Activated CD4-positive, alpha-beta memory T cell treated with anti-CD3 and anti-CD28 coated beads, Interleukin-2, amount 10 ng/mL, durations not matched to agents 7 days and 5 days (primary cell): ENCODE measurements at regions of chr17 and their contacts with region 1.

Region 1: DNA sequence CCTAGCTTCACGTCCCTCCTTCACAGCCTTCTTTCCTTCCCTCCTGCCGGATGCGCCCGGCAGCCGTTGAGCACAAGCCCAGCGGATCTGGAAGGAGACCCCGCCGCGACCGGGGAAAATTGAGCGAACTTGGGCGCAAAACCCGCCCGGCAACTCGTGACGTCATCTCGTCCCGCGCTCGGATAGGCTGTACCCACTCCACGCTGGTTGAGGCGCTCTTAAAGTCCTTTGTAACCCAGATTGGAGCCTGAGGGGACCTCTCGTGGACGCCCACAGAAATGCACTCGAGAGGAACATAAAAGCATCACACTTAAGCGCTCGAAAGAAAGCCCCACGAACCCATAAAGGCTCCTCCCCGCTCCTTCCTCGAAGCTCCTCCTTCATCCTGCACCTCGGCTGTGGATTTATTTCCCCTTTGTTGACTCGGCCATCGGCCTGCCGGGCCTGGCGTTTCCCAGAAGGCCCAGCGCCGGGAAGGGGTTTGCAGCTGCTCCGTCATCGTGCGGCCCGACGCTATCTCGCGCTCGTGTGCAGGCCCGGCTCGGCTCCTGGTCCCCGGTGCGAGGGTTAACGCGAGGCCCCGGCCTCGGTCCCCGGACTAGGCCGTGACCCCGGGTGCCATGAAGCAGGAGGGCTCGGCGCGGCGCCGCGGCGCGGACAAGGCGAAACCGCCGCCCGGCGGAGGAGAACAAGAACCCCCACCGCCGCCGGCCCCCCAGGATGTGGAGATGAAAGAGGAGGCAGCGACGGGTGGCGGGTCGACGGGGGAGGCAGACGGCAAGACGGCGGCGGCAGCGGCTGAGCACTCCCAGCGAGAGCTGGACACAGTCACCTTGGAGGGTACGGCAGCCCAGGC is at the start of gene PSMD3:
- DNase-seq: peak; percentile 99
- H3K4me3 Mint-ChIP-seq: peak within 1 kb of the TSS; percentile 91
- H3K27ac Mint-ChIP-seq: peak within 1 kb of the TSS; percentile 82
- H3K4me1 Mint-ChIP-seq: peaks cover 35% of the 10 kb centered on the region
- H3K27me3 Mint-ChIP-seq: peaks cover 12% of the 10 kb centered on the region
- total RNA-seq, gene PSMD3: 90.3 to 92.2 TPM

Region 2: DNA sequence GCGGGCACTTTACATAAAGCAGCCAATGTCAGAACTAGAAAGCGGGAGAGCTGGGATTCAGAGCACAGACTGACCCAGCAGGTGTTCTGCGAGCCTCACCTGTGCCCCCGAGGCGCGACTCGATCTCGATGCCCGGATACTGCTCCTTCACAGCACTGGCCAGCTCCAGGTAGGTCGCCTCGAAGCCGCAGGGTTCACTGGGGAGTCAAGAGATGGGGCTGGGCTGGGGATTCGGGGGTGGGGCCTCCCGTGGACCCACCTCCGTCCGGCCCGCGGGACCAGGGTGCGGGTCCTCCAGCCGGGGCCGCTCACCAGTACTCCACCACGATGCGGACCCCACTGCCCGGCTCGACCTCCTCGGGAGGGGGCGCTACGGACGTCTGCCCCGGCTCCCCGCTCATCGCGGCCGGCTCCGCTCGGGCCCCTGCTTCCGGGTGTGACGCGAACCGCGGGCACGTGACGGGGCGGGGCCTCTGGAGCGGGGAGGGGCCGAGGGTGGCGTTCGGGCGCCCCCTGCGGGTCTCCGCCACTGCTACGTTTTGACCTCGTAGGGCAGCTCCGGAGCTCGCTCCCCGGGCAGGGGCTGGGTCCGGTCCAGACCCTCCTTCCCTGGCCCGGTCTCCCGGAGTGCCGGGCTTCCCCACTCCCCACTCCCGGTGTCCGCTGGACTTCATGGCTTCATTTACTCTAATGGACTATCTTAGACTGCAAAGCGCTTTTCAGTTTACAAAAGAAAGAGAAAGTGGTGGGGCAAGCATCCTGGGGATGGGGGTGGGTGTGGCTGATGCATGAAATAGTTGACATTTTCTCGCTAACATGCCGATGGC is 250.3 kb before region 1 on chr17 and contains the start of gene MIEN1:
- CTCF ChIA-PET with region 1: interaction called, 3 read pairs
- POLR2A ChIA-PET with region 1: interaction called, 16 read pairs
- DNase-seq: peak; percentile 95
- H3K4me3 Mint-ChIP-seq: peak within 1 kb of the TSS; percentile 88
- H3K27ac Mint-ChIP-seq: peak within 1 kb of the TSS; percentile 83
- H3K4me1 Mint-ChIP-seq: peaks cover 19% of the 10 kb centered on the region
- H3K27me3 Mint-ChIP-seq: peaks cover 5% of the 10 kb centered on the region
- total RNA-seq, gene MIEN1: 40.1 to 45.1 TPM

Region 3: GRCh38 chr17:39872751-39873150 is 107.8 kb before region 1 on chr17:
- CTCF ChIA-PET with region 1: interaction called, 30 read pairs
- POLR2A ChIA-PET with region 1: interaction called, 6 read pairs
- DNase-seq: no peak
- H3K4me3 Mint-ChIP-seq: no peak overlapping the region
- H3K27ac Mint-ChIP-seq: no peak overlapping the region
- H3K4me1 Mint-ChIP-seq: peaks cover 13% of the 10 kb centered on the region
- H3K27me3 Mint-ChIP-seq: peaks cover 5% of the 10 kb centered on the region

Region 4: GRCh38 chr17:39915559-39915958 is 65.0 kb before region 1 on chr17:
- CTCF ChIA-PET with region 1: no interaction called
- POLR2A ChIA-PET with region 1: no interaction called
- DNase-seq: no peak
- H3K4me3 Mint-ChIP-seq: no peak overlapping the region
- H3K27ac Mint-ChIP-seq: no peak overlapping the region
- H3K4me1 Mint-ChIP-seq: peaks cover 39% of the 10 kb centered on the region
- H3K27me3 Mint-ChIP-seq: no peaks in the 10 kb centered on the region

Region 5: GRCh38 chr17:39939588-39940419 is 40.8 kb before region 1 on chr17:
- CTCF ChIA-PET with region 1: interaction called, 3 read pairs
- POLR2A ChIA-PET with region 1: interaction called, 10 read pairs
- DNase-seq: peak; percentile 55
- H3K4me3 Mint-ChIP-seq: no peak overlapping the region
- H3K27ac Mint-ChIP-seq: peak overlapping the region; percentile 66
- H3K4me1 Mint-ChIP-seq: peaks cover 18% of the 10 kb centered on the region
- H3K27me3 Mint-ChIP-seq: no peaks in the 10 kb centered on the region

Region 6: GRCh38 chr17:39963829-39964228 is 16.8 kb before region 1 on chr17:
- CTCF ChIA-PET with region 1: interaction called, 72 read pairs
- POLR2A ChIA-PET with region 1: interaction called, 22 read pairs
- DNase-seq: peak; percentile 25
- H3K4me3 Mint-ChIP-seq: no peak overlapping the region
- H3K27ac Mint-ChIP-seq: peak overlapping the region; percentile 8
- H3K4me1 Mint-ChIP-seq: peaks cover 32% of the 10 kb centered on the region
- H3K27me3 Mint-ChIP-seq: peaks cover 10% of the 10 kb centered on the region

Region 7: DNA sequence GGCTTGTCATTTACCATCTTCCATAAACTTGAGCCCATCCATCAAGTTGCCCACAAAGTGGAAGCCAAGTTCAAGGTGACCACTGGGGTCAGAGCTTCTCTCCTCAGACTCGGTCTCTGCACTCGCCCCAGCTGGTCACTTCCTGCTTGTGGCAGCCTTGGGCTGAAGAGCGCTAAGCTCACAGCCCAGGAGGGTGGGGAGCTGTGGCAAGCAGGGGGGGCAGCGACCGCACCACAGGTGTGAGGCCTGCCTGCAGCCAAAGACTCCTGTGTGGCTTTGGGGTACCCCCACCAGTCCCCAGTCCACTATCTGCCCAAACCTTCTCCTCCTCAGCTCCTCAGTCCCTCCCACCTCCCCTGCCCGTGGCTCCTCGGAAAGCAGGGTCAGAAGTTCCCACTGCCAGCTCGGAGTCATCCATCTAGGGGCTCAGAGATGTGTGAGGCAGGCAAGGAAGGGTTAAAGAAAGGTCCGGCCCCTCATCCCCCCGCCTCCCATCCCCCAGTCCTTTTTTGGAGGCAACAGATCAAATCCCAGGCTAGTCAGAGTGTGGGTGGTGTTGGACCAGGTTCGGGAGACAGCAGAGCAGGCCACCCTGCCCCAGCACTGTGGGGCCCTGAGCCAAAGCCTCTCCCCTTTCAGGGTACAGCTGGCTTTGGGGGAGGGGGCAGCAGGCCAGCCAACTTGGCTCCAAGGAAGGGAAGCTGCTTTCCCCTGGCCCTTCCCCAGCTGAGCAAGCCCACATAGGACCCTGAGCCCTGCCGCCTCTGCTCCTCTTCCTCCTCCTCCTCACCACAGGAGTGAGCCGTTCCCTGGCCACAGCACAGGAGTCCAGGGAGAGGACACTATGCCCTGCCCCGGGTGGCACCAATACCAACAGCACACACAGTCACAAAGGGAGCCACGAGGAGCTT is 37.9 kb after region 1 on chr17:
- CTCF ChIA-PET with region 1: interaction called, 10 read pairs
- POLR2A ChIA-PET with region 1: no interaction called
- DNase-seq: no peak
- H3K4me3 Mint-ChIP-seq: no peak overlapping the region
- H3K27ac Mint-ChIP-seq: no peak overlapping the region
- H3K4me1 Mint-ChIP-seq: peaks cover 4% of the 10 kb centered on the region
- H3K27me3 Mint-ChIP-seq: no peaks in the 10 kb centered on the region